Heart right ventricle (tissue), 16 donors: ENCODE measurements at regions of chr5 and their contacts with region 1.

Region 1: DNA sequence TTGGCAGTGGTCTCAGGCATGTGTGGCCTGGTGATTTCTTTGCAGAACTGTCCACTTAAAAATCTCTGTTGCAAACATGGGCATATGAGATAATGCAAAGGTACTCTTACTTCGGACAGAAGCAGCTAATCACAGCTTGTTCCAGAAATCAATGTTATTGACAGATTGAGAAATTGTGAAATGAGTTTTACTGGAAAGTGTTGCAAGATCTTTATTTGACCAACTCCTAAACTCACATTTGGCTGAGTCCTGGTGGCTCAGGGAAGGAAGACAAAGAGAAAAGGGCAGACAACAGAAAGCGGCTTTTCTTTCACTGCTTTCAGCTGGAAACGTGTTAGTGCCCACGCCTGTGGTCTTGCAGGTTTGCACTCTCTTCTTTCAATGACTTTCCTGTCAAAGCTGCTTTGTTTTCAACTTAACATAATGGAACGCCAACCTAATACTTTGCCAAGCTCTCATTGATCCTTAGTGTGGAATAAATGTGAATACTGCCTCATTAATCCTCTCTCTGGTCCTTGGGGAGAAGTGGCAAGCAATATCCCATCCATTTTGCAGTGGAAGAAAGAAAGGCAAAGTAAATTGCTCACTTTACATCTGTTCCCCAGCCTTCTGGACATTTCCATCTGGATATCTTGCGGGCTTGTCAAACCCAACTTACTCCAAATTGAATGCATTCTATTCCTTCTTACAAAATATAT is 586.4 kb downstream of the LRRC70 start:
- DNase-seq: no peak
- ATAC-seq: no peak
- H3K4me3 ChIP-seq: no peak overlapping the region
- H3K27ac ChIP-seq: no peak overlapping the region
- H3K4me1 ChIP-seq: no peaks in the 10 kb centered on the region
- H3K27me3 ChIP-seq: no peaks in the 10 kb centered on the region
- CTCF ChIP-seq: no peak

Region 2: GRCh38 chr5:63228144-63228543 is 63.2 kb after region 1 on chr5:
- intact Hi-C with region 1: loop called in 1 of 10 experiments (anchors 10 kb)
- DNase-seq: no peak
- ATAC-seq: no peak
- H3K4me3 ChIP-seq: no peak overlapping the region
- H3K27ac ChIP-seq: no peak overlapping the region
- H3K4me1 ChIP-seq: no peaks in the 10 kb centered on the region
- H3K27me3 ChIP-seq: no peaks in the 10 kb centered on the region
- CTCF ChIP-seq: no peak

Region 3: GRCh38 chr5:63648376-63648775 is 483.4 kb after region 1 on chr5:
- intact Hi-C with region 1: no loop called
- DNase-seq: no peak
- ATAC-seq: no peak
- H3K4me3 ChIP-seq: no peak overlapping the region
- H3K27ac ChIP-seq: no peak overlapping the region
- H3K4me1 ChIP-seq: no peaks in the 10 kb centered on the region
- H3K27me3 ChIP-seq: no peaks in the 10 kb centered on the region
- CTCF ChIP-seq: no peak